MCF 10A (cell line): ENCODE measurements at regions of chr19 and their contacts with region 1.

Region 1: DNA sequence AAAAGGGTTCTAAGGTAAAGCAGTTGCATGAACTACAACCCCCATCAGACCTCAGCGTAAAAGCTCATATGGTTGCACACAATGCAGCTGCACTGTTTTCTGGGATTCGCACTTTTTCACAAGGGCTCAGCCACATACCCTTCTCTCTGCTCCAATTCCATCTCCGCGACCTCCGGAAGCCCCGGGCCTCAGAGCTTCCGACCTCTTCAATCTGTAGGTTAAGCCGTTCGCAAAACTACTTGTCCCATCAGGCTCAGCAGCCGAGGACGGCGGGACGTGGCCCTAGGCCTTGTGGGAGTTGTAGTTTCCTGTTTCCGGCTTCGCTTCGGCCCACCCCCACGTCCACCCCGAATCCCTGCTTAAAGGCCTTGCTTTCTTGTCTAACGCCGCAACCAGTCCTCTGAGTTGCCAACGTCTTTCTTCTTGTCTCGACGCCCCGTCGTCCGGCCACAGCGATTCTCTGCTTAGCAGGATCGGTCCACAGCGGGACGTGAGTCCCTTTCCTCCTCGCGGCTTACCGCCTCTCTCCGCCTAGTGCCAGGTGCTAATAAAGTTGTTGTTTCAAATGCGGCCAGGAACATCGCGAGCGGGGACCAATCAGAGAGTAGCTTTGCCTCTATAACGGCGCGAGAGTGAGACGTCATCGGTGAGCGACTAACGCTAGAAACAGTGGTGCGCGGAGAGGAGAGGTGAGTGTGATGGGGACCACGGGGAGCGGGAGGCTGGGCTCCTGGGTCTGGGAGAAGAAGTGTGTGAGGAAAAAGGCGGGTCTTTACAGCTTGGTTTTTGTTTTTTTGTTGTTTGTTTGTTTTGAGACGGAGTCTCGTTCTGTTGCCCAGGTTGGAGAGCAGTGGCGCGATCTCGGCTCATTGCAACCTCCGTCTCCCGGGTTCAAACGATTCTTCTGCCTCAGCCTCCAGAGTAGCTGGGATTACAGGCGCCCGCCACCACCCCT is at the starts of genes PRPF31 and TFPT:
- DNase-seq: peak; percentile 99
- H3K4me3 Mint-ChIP-seq: peak within 1 kb of the TSS; percentile 84
- H3K27ac Mint-ChIP-seq: peak within 1 kb of the TSS; percentile 98
- H3K4me1 Mint-ChIP-seq: peaks cover 6% of the 10 kb centered on the region
- H3K27me3 Mint-ChIP-seq: no peaks in the 10 kb centered on the region
- CTCF ChIP-seq: no peak
- total RNA-seq, gene PRPF31: 52.8 and 59.7 TPM in 2 replicates
- total RNA-seq, gene TFPT: 15.6 and 22.8 TPM in 2 replicates

Region 2: DNA sequence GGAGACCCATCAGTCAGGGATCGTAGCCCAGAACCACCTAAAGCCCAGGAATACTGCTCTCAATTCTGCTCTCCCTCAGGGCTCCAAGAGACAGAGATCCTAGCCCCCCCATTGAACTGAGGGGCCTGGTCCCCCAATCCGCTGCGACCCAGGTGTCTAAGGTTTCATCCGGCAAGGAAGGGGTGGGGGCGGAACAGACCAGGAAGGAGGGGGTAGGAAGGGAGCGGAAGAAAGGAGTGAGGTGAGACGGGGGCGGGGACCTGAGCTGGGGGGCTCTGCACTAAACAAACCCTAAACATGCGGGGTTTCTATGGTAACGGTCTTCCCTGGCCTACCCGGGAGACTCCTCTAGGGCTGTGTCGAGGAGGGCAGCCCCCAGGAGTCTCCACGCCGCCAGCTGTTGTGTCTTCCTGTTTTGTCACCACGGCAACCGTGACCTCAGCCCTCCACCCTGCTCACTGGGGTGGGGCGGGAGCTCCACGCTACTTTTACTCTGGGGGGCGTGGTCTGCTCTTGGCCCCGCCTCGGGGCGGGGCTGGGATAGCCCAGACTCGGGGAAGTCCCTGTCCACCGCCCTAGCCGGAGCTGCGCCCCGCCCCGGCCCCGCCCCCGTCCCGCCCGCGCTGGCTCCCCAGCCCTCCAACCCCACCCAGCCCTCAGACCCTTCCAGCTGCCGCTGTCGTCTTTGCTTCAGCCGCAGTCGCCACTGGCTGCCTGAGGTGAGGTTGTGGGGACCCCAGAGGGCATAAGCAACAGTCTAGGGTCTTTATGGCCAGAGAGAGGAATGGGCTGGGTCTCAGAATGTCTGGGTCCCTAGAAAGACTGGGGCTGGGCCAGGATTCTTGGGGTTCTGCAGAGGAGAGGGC is 247.9 kb before region 1 on chr19 and contains the start of gene MYADM:
- CTCF ChIA-PET with region 1: interaction called, 3 read pairs
- POLR2A ChIA-PET with region 1: interaction called, 10 read pairs
- intact Hi-C with region 1: no loop called
- DNase-seq: peak; percentile 97
- H3K4me3 Mint-ChIP-seq: peak within 1 kb of the TSS; percentile 97
- H3K27ac Mint-ChIP-seq: peak within 1 kb of the TSS; percentile 100
- H3K4me1 Mint-ChIP-seq: peaks cover 20% of the 10 kb centered on the region
- H3K27me3 Mint-ChIP-seq: no peaks in the 10 kb centered on the region
- CTCF ChIP-seq: no peak
- total RNA-seq, gene MYADM: 39.0 and 43.3 TPM in 2 replicates

Region 3: GRCh38 chr19:54102421-54103169 is 12.8 kb before region 1 on chr19 and contains the start of gene NDUFA3:
- CTCF ChIA-PET with region 1: no interaction called
- POLR2A ChIA-PET with region 1: interaction called, 45 read pairs
- intact Hi-C with region 1: no loop called
- DNase-seq: peak; percentile 99
- H3K4me3 Mint-ChIP-seq: peak within 1 kb of the TSS; percentile 99
- H3K27ac Mint-ChIP-seq: peak within 1 kb of the TSS; percentile 91
- H3K4me1 Mint-ChIP-seq: peaks cover 9% of the 10 kb centered on the region
- H3K27me3 Mint-ChIP-seq: no peaks in the 10 kb centered on the region
- CTCF ChIP-seq: no peak
- total RNA-seq, gene NDUFA3: 111 and 128 TPM in 2 replicates

Region 4: GRCh38 chr19:54159352-54160181 is 44.2 kb after region 1 on chr19 and contains the start of gene LENG1:
- CTCF ChIA-PET with region 1: no interaction called
- POLR2A ChIA-PET with region 1: interaction called, 10 read pairs
- intact Hi-C with region 1: no loop called
- DNase-seq: peak; percentile 100
- H3K4me3 Mint-ChIP-seq: peak within 1 kb of the TSS; percentile 76
- H3K27ac Mint-ChIP-seq: peak within 1 kb of the TSS; percentile 85
- H3K4me1 Mint-ChIP-seq: peaks cover 22% of the 10 kb centered on the region
- H3K27me3 Mint-ChIP-seq: no peaks in the 10 kb centered on the region
- CTCF ChIP-seq: no peak
- total RNA-seq, gene LENG1: 6.1 and 8.2 TPM in 2 replicates